MCF 10A (cell line): ENCODE measurements at regions of chr9 and their contacts with region 1.

Region 1: DNA sequence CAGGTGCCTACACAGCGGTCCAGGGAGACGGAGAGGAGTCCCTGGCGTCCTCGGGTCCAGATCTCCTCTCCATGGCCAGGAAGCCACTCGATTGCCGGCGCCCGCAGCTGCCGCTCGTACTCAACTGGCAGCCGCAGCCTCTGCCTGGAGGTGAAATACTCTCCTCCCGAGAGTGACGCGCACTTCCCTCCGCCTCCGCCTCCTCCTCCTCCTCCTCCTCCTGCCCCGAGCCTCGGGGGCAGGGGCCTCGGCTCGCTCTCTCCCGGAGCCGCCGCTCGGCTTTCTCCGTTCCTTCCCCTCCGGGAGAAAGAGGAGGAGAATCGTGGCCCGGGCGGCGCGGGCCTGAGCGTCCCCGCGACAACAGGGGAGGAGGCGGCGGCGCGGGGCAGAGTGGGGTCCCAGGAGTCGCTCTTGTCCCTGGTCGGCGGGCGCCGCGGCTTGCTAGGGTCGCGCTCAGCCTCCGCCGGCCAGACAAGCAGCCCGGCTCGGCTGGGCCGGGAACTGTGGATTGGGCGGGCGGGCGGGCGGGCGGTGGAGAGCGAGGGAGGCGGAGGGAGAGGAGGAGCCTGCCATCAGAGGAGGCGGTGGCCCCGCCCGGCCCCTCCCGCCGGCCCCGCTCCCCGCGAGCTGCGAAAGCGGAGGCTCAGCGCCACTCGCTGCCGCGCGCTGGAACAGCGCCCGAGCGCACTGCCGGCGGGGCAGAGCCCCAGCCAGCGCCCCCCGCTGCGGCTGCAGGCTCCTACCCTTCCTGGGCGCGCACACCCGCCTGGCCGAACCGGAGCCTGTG is at the start of gene CEMIP2:
- DNase-seq: peak; percentile 93
- H3K4me3 Mint-ChIP-seq: peak within 1 kb of the TSS; percentile 92
- H3K27ac Mint-ChIP-seq: peak within 1 kb of the TSS; percentile 75
- H3K4me1 Mint-ChIP-seq: peaks cover 42% of the 10 kb centered on the region
- H3K27me3 Mint-ChIP-seq: no peaks in the 10 kb centered on the region
- CTCF ChIP-seq: peak; percentile 41
- total RNA-seq, gene CEMIP2: 13.7 and 17.7 TPM in 2 replicates

Region 2: GRCh38 chr9:71490810-71491209 is 277.8 kb before region 1 on chr9:
- CTCF ChIA-PET with region 1: interaction called, 10 read pairs
- POLR2A ChIA-PET with region 1: interaction called, 4 read pairs
- intact Hi-C with region 1: loop called (anchors 2 kb)
- DNase-seq: peak; percentile 33
- H3K4me3 Mint-ChIP-seq: no peak overlapping the region
- H3K27ac Mint-ChIP-seq: no peak overlapping the region
- H3K4me1 Mint-ChIP-seq: peaks cover 3% of the 10 kb centered on the region
- H3K27me3 Mint-ChIP-seq: no peaks in the 10 kb centered on the region
- CTCF ChIP-seq: peak; percentile 50

Region 3: DNA sequence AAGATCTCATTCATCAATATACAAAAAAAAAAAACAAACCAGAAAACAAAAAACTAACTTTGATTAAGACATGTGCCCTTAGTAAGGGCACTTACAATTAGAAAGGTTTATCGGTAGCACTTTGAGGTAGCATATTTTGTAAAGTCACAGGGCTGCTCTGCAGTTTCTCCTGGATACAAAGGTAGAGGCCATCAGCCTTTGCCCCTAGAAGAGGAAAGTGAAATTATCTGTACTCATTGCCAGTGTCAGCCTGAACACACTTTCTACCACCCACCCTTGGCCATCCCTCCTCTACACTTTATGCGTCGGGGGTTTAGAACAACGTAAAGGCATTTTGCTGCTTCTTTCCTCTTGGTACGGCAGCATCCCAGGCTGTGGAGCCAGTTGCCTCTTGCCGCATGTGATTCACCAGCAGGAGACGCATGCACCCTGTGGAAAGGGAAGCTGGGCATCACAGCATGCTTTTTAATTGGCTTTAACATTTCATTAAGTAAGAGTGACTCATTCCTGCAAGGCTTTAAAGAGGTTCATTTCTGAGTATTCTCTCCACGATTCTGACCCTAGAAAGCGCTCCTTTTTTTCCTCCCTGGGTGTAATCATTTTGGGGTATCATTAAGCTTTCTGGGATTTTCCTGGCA is 84.9 kb before region 1 on chr9:
- CTCF ChIA-PET with region 1: interaction called, 91 read pairs
- POLR2A ChIA-PET with region 1: interaction called, 75 read pairs
- intact Hi-C with region 1: loop called (anchors 1 kb)
- DNase-seq: peak; percentile 88
- H3K4me3 Mint-ChIP-seq: peak overlapping the region; percentile 15
- H3K27ac Mint-ChIP-seq: no peak overlapping the region
- H3K4me1 Mint-ChIP-seq: peaks cover 35% of the 10 kb centered on the region
- H3K27me3 Mint-ChIP-seq: no peaks in the 10 kb centered on the region
- CTCF ChIP-seq: peak; percentile 62

Region 4: DNA sequence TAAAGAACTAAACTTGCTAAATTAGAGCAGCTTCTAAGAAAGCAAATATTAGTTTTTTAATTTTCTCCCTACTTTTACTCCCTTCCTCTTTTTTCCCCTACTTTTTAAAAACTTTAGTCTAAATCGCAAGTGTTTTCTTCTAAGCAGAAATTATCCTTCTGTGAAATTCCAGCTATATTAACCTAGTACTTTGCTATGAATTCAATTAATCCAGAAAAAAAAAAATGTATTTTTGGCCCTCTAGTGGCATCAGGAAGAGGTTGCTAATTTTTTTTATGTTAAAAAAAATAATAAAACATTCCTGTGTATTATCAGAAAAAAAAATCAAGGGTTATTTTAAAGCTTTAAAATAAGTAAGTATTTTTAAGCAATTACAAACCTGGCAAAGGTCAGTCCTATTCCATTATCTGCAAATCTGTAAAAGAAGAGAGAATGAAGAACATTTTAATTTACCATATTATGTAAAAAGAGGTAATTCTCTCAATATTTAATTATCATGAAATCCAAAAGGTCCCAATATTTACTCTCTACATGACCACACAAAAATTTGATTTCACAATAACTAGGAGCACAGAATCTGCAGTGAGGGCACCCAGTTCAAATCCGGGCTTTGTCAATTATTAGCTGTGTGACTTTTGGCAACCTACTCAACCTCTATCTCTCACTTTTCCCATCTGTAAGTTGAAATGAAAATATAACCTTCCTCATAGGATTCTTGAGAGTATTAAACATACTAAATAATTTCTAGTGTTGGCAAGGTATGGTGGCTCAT is 52.3 kb before region 1 on chr9:
- CTCF ChIA-PET with region 1: interaction called, 14 read pairs
- POLR2A ChIA-PET with region 1: interaction called, 9 read pairs
- intact Hi-C with region 1: no loop called
- DNase-seq: no peak
- H3K4me3 Mint-ChIP-seq: no peak overlapping the region
- H3K27ac Mint-ChIP-seq: peak overlapping the region; percentile 54
- H3K4me1 Mint-ChIP-seq: peaks cover 19% of the 10 kb centered on the region
- H3K27me3 Mint-ChIP-seq: no peaks in the 10 kb centered on the region
- CTCF ChIP-seq: peak; percentile 42

Region 5: DNA sequence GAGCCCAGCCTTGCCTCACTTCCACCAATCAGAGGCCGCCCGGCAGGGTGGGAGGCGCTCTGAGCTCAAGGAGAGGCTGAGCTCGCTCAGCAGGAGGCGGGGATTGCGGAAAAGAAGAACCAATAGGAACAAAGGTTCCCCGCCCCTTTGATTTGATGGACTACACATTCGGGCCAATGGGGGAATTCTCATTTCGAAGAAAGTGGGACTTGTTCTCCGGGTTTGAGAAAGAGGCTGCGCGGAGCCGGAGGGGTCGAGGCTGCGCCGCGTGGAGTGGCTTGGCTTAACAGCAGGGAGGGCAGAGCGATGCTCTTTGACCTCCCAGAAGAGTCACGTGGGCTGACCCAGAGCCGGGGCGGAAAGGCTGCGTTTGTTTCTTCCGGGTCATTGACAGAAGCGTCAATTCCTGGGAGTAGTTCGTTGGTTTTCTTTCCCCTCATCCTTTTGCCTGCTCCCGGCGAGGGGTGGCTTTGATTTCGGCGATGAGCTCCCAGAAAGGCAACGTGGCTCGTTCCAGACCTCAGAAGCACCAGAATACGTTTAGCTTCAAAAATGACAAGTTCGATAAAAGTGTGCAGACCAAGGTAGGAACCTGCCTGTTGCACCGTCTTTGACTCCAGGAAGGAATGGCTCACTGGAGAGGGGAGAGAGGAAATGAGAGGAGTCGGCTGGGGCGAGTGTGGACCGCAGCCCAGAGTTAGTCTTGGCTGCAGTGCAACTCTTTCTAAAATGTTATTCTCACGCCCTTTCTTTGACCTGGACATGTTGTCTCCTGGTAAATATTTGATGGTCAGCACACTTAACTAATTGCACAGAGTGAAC is 142.9 kb after region 1 on chr9 and contains the start of gene C9orf85:
- CTCF ChIA-PET with region 1: no interaction called
- POLR2A ChIA-PET with region 1: interaction called, 4 read pairs
- intact Hi-C with region 1: loop called (anchors 5 kb)
- DNase-seq: peak; percentile 100
- H3K4me3 Mint-ChIP-seq: peak within 1 kb of the TSS; percentile 95
- H3K27ac Mint-ChIP-seq: peak within 1 kb of the TSS; percentile 88
- H3K4me1 Mint-ChIP-seq: peaks cover 23% of the 10 kb centered on the region
- H3K27me3 Mint-ChIP-seq: no peaks in the 10 kb centered on the region
- CTCF ChIP-seq: no peak
- total RNA-seq, gene C9orf85: 19.6 and 23.3 TPM in 2 replicates